ENCODE measurements at regions of chr1 and their contacts with region 1.

Region 1: DNA sequence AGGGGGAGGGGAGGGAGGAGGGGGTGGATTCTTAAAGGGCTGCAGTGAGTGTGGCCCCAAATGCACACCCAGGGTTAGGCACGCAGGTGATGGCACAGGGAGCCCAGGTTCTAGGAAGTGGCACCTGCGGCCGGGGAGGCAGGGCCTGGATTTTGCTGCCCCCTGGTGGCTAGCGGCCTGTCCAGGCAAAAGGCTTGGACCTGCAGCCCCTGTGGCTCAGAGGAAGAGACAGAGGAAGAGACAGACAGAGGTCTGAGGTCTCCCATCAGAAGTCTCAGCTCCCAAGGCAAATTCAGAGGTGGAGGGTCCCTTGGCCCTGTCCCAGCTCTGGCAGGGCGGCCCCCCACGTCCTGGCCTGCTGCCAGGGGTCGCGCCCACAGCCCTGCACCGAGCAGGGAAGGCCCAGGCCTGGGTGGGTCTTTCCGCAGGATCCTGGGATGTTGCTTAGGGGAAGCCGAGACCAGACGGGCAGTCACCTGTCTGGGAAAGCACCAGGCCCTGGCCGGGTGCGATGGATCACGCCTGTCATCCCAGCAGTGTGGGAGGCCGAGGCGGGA is 8.1 kb upstream of the TNFRSF14 start:
- DNase-seq: peak; percentile 82 to 90
- H3K4me3 ChIP-seq: peak overlapping the region; percentile 45 to 73 (median 49)
- H3K27ac ChIP-seq: peak overlapping the region; percentile 98 to 100
- H3K4me1 ChIP-seq: peaks cover 32 to 33% of the 10 kb centered on the region in 2 donors
- H3K27me3 ChIP-seq: no peaks in the 10 kb centered on the region
- CTCF ChIP-seq: peak; percentile 86 to 95 (median 90)
- POLR2A ChIP-seq: no peak

Region 2: GRCh38 chr1:2412519-2413233 is 135.4 kb before region 1 on chr1 and contains the start of gene PEX10:
- intact Hi-C with region 1: loop called (anchors 2 kb)
- DNase-seq: peak; percentile 97 to 98
- H3K4me3 ChIP-seq: peak within 1 kb of the TSS; percentile 86 to 95 (median 89)
- H3K27ac ChIP-seq: peak within 1 kb of the TSS; percentile 88 to 94
- H3K4me1 ChIP-seq: peaks cover 15 to 17% of the 10 kb centered on the region in 2 donors
- H3K27me3 ChIP-seq: peaks cover 0 to 10% of the 10 kb centered on the region in 2 donors
- CTCF ChIP-seq: peak in 2 of 3 donors; percentile 11 to 19
- POLR2A ChIP-seq: no peak
- total RNA-seq, gene PEX10: 23.3 to 37.4 (median 24.1) TPM

Region 3: DNA sequence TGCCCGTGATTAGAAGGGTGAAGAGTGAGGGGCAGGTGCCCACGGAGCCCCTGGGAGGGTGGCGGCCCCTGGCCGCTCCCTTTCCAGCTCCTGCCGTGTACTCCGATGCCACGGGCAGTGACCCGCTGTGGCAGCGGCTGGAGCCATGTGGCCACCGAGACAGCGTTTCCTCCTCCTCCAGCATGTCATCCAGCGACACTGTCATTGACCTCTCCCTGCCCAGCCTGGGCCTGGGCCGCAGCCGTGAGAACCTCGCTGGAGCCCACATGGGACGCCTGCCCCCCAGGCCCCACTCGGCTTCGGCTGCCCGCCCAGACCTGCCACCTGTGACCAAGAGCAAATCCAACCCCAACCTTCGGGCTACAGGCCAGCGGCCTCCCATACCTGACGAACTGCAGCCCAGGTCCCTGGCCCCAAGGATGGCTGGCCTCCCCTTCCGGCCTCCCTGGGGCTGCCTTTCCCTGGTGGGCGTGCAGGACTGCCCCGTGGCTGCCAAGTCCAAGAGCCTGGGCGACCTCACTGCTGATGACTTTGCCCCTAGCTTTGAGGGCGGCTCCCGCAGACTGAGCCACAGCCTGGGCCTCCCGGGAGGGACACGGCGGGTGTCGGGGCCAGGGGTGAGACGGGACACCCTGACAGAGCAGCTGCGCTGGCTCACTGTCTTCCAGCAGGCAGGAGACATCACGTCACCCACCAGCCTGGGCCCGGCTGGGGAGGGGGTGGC is 43.7 kb before region 1 on chr1:
- intact Hi-C with region 1: no loop called
- DNase-seq: no peak
- H3K4me3 ChIP-seq: no peak overlapping the region
- H3K27ac ChIP-seq: no peak overlapping the region
- H3K4me1 ChIP-seq: no peaks in the 10 kb centered on the region
- H3K27me3 ChIP-seq: peaks cover 0 to 35% of the 10 kb centered on the region in 2 donors
- CTCF ChIP-seq: no peak
- POLR2A ChIP-seq: no peak